SK-MEL-5 (cell line): ENCODE measurements at regions of chr9 and their contacts with region 1.

Region 1: GRCh38 chr9:68584189-68585033 is 43.7 kb upstream of the TMEM252 start:
- DNase-seq: peak; percentile 91

Region 2: DNA sequence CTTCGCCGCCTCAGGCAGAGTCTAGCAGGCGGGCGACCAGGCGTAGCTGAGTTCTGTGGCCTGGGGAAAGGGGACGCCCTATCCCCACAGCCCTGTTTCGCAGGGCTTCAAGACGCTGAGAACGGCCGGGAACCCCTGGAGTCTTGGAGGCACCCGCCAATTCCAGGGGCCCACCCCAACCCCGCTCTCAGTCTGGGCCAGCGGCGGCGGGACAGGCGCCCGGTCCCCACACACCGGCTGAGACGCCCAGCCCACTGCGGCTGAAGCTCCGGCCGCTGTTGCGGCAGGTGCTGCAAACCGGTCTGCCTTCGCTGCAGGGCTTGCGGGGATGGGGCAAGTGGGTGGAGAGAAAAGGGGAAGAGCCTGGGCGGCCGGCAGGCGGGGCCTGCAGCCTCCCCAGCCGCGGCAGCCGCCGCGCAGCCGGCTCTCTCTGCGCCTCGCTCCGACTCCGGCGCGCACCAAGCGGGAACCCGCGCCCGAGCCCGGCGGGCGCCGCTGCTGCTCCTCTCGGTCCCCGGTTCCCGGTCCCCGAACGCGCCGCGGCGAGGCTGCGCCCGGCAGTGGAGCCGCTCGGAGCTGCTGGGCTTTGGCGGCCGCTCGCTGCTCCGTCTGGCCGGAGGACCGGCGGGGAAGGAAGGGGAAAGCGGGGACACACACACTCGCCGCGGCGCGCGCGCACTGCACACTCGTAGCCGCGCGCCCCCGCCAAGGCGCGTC is 120.6 kb after region 1 on chr9 and contains the start of gene PIP5K1B:
- in situ Hi-C with region 1: loop called (anchors 25 kb)
- DNase-seq: peak; percentile 70
- total RNA-seq, gene PIP5K1B: 5.0 and 7.4 TPM in 2 replicates

Region 3: DNA sequence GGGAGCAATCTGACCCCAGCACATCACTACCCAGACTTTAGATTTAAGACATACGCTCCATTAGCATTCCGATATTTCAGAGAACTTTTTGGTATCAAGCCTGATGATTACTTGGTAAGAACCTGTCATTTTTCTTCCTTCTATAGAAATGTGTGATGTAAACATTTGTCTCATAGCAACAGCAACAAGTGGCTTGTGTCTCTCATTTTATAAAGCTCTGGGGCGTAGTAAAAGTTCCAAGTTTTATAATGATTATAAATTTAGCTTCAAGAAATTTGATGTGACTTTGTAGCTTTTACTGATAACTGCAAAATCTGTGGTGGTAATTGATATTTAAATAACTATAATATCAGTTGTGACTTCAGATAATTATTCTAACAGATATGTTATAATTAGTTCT is 292.3 kb after region 1 on chr9:
- in situ Hi-C with region 1: no loop called
- DNase-seq: peak; percentile 47